ENCODE measurements at regions of chr3 and their contacts with region 1.

Region 1: DNA sequence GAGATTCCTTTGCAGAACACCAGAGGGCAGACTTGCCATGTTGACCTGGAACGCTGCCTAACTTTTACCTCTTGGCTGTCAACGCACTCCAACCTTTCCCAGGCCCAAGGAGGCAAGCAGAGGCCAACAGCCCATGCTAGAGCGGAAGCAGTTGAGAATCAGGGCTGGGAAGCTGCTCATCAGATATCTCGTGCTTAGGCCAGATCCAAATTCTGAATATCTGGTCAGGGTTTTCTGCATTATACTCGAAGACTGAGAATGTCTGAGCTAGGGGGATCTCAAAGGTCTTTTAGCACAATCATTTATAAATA is 2.5 kb downstream of the XIRP1 start:
- DNase-seq: no peak
- H3K4me3 ChIP-seq: no peak overlapping the region
- CTCF ChIP-seq: peak; percentile 82

Region 2: DNA sequence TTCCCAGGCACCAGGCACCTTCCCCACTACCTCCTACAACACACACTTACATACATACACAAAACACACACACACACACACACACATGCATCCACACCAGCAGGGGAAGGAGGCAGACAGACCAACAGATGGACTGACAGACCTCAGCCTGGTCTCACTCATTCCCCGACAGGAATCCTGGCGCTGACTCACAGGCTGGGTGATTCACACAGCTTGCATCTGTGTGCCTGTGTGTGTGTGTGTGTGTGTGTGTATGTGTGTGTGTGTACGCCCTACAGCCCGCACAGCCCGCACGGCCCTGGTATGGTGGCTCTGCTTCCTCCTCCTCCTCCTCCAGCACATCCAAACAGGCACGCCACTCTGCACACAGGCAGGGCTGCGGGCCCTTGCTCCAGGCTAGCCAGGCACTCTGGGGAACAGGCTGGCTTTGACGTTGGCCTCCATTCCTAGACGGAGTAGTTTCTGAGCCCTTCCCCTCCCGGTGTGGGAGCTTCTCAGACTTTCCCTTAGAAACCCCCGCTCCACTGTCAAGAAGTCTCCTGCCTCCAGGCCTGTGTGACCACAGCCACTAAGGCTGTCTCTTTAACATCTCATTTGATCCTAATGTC is 42.8 kb before region 1 on chr3:
- CTCF ChIA-PET with region 1: interaction called, 12 read pairs
- POLR2A ChIA-PET with region 1: no interaction called
- DNase-seq: peak; percentile 98
- H3K4me3 ChIP-seq: peak overlapping the region; percentile 32
- CTCF ChIP-seq: no peak

Region 3: GRCh38 chr3:39208463-39209055 is 18.6 kb after region 1 on chr3:
- CTCF ChIA-PET with region 1: interaction called, 25 read pairs
- POLR2A ChIA-PET with region 1: no interaction called
- DNase-seq: no peak
- H3K4me3 ChIP-seq: no peak overlapping the region
- CTCF ChIP-seq: peak; percentile 77

Region 4: GRCh38 chr3:39279745-39280517 is 90.0 kb after region 1 on chr3 and contains the start of gene CX3CR1:
- CTCF ChIA-PET with region 1: interaction called, 574 read pairs
- POLR2A ChIA-PET with region 1: interaction called, 5 read pairs
- DNase-seq: no peak
- H3K4me3 ChIP-seq: no peak within 1 kb of the TSS
- CTCF ChIP-seq: no peak

Measured in AG04449 (cell line).